Astrocyte of the cerebellum (primary cell): ENCODE measurements at regions of chr1 and their contacts with region 1.

Region 1: DNA sequence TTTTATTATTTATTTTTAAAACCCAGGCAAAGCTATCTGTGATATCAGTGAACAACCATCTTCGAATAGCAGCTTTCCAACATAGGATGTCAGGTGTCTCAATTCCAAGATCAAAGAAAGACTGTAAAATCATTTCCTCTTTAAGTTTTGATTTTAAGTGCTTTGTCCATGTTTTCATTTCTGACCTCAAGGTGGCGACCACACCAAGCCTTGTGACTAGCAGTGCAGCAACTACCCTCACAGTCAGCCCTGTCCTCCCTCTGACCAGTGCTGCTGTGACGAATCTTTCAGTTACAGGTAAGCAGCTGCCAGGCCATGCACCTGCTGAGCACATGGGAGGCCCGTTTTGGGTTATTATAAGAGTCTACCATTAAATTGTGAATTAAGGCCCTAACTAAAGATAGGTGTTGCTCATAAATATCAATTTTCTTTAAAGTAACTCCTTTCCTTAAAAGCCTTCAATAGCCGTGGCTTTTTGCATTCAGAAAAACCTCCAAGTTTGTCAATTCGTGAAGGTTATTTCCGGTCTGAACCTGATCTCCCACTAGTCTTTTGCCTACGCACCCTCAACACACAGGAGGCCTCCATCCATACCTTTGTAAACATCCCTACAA is 117.0 kb downstream of the CD247 start:
- DNase-seq: peak; percentile 24
- H3K4me3 ChIP-seq: no peak overlapping the region
- CTCF ChIP-seq: peak; percentile 60

Region 2: GRCh38 chr1:167066333-167067122 is 334.8 kb before region 1 on chr1:
- in situ Hi-C with region 1: loop called (anchors 25 kb)
- DNase-seq: peak; percentile 13
- H3K4me3 ChIP-seq: peak overlapping the region; percentile 32
- CTCF ChIP-seq: peak; percentile 96

Region 3: DNA sequence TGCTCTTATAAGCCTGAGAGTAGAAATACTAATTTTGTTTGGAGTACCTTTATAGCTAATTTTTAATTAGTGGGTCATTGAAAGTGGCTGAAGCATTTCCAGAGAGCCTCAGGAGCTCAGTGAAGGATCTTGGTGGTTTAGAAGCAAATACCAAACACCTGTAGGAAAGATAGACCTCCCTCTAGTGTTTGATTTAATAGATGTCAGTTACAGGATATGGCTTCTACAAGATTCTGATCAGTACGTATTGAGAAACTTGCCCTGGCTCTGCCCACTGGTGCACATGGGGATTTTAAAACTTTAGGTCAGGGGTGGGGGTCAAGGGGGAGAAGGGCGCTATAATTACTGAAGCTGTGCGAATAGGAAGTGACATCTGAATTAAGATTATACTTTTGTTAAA is 58.5 kb before region 1 on chr1:
- in situ Hi-C with region 1: no loop called
- DNase-seq: no peak
- H3K4me3 ChIP-seq: no peak overlapping the region
- CTCF ChIP-seq: no peak

Region 4: GRCh38 chr1:167489571-167490340 is 88.4 kb after region 1 on chr1:
- in situ Hi-C with region 1: no loop called
- DNase-seq: no peak
- H3K4me3 ChIP-seq: no peak overlapping the region
- CTCF ChIP-seq: no peak

Region 5: GRCh38 chr1:167904652-167905130 is 503.3 kb after region 1 on chr1:
- in situ Hi-C with region 1: no loop called
- DNase-seq: no peak
- H3K4me3 ChIP-seq: no peak overlapping the region
- CTCF ChIP-seq: no peak